Posterior vena cava (tissue), 2 donors: ENCODE measurements at regions of chr2 and their contacts with region 1.

Region 1: GRCh38 chr2:151999053-151999452 is 99.8 kb downstream of the CACNB4 start:
- DNase-seq: no peak

Region 2: DNA sequence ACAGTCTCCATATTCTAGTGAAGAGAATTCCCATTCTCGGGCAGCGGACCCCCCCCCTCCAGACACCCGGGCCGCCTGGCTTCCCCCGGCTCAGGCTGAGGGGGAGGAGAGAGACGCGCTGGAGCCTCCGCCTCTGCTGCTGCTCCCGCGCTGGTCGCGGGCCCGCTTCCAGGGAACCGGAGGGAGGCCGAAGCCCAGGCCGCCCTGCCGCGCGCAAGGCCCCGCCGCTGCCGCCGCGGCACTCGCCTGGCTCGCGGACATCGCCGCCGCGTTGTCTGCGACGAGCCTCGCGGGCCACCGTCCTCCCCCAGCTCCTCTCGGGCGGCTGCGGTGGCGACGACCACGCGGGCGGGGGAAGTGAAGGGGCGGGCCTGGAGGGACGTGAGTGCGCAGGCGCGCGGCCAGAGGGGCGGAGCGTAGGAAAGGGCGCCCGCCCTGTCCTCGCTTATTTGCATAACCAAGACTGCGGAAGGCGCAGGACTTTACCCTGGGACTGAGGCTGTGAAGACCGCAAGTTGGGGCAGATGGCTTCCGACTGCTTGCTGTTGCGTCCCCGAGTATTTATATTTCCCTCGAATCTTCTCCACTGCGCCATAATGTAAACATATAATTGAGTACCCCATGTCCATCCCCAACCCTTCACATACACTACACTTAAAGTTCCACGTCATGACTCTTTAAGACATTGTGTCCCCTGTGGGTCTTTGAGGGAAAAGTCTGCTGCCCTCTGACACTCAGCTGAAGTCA is 170.7 kb before region 1 on chr2 and contains the start of gene ARL5A:
- intact Hi-C with region 1: loop called in 1 of 2 experiments (anchors 5 kb)
- DNase-seq: peak; percentile 99
- total RNA-seq, gene ARL5A: 68.9 to 99.9 TPM